Heart right ventricle (tissue), 16 donors: ENCODE measurements at regions of chr19 and their contacts with region 1.

Region 1: GRCh38 chr19:15107061-15108010 is at the start of gene SYDE1:
- DNase-seq: peak; percentile 68
- ATAC-seq: peak; percentile 60 to 89 (median 76)
- H3K4me3 ChIP-seq: peak within 1 kb of the TSS; percentile 74 to 96 (median 90)
- H3K27ac ChIP-seq: peak within 1 kb of the TSS; percentile 91 to 98 (median 97)
- H3K4me1 ChIP-seq: peaks cover 0 to 21% (median 15%) of the 10 kb centered on the region in 9 donors
- H3K27me3 ChIP-seq: peaks cover 0 to 20% (median 0%) of the 10 kb centered on the region in 7 donors
- CTCF ChIP-seq: no peak
- total RNA-seq, gene SYDE1: 11.5 to 17.1 (median 13.1) TPM

Region 2: DNA sequence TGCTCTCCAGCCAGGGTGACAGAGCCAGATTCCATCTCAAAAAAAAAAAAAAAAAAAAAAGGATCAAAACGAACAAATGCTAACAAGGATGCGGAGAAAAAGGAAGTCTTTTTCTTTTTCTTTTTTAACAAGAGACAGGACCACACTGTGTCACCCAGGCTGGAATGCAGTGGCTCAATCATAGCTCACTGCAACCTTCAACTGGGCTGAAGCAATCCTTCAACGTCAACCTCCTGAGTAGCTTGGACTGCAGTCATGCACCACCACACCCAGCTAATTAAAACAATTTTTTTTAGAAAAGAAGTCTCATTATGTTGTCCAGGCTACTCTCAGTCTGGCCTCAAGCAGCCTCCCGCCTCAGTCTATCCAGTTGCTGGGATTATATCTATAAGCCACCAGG is 200.6 kb before region 1 on chr19:
- intact Hi-C with region 1: no loop called
- DNase-seq: no peak
- ATAC-seq: no peak
- H3K4me3 ChIP-seq: no peak overlapping the region
- H3K27ac ChIP-seq: no peak overlapping the region
- H3K4me1 ChIP-seq: no peaks in the 10 kb centered on the region
- H3K27me3 ChIP-seq: peaks cover 0 to 34% (median 16%) of the 10 kb centered on the region in 7 donors
- CTCF ChIP-seq: no peak

Region 3: DNA sequence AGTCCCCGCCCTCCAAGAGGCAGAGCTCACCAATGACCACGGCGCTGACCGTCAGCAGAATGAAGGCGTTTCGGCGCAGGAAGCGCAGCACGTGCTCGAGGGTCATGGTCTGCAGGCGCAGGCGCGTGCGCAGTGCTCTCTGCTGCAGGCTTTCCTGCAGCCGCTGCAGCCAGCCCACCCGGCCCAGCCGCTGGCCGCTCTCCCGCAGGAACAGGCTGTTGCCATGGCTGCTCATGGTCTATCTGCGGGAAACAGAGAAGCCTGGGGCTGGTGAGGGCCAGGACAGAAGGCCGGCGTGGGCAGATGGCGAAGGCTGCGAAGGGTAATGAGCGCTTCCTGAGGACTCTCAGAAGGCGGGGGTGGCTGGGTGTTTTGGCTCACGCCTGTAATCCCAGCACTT is 134.7 kb before region 1 on chr19:
- intact Hi-C with region 1: no loop called
- DNase-seq: no peak
- ATAC-seq: no peak
- H3K4me3 ChIP-seq: no peak overlapping the region
- H3K27ac ChIP-seq: no peak overlapping the region
- H3K4me1 ChIP-seq: no peaks in the 10 kb centered on the region
- H3K27me3 ChIP-seq: peaks cover 0 to 45% (median 27%) of the 10 kb centered on the region in 7 donors
- CTCF ChIP-seq: no peak

Region 4: GRCh38 chr19:15022752-15023151 is 84.6 kb before region 1 on chr19:
- intact Hi-C with region 1: no loop called
- DNase-seq: no peak
- ATAC-seq: no peak
- H3K4me3 ChIP-seq: no peak overlapping the region
- H3K27ac ChIP-seq: no peak overlapping the region
- H3K4me1 ChIP-seq: no peaks in the 10 kb centered on the region
- H3K27me3 ChIP-seq: peaks cover 0 to 61% (median 38%) of the 10 kb centered on the region in 7 donors
- CTCF ChIP-seq: no peak

Region 5: GRCh38 chr19:15125232-15126067 is 18.1 kb after region 1 on chr19:
- intact Hi-C with region 1: loop called in 3 of 10 experiments (anchors 1 kb)
- DNase-seq: peak; percentile 99
- ATAC-seq: peak; percentile 91 to 97 (median 94)
- H3K4me3 ChIP-seq: peak overlapping the region; percentile 49 to 88 (median 68)
- H3K27ac ChIP-seq: peak overlapping the region; percentile 89 to 98 (median 94)
- H3K4me1 ChIP-seq: peaks cover 0 to 33% (median 22%) of the 10 kb centered on the region in 9 donors
- H3K27me3 ChIP-seq: no peaks in the 10 kb centered on the region
- CTCF ChIP-seq: no peak

Region 6: GRCh38 chr19:15297416-15298224 is 190.3 kb after region 1 on chr19:
- intact Hi-C with region 1: no loop called
- DNase-seq: no peak
- ATAC-seq: no peak
- H3K4me3 ChIP-seq: no peak overlapping the region
- H3K27ac ChIP-seq: peak overlapping the region in 2 of 10 donors; percentile 53 to 60
- H3K4me1 ChIP-seq: peaks cover 48 to 100% (median 94%) of the 10 kb centered on the region in 9 donors
- H3K27me3 ChIP-seq: no peaks in the 10 kb centered on the region
- CTCF ChIP-seq: no peak